RWPE1 (cell line): ENCODE measurements at regions of chr6 and their contacts with region 1.

Region 1: DNA sequence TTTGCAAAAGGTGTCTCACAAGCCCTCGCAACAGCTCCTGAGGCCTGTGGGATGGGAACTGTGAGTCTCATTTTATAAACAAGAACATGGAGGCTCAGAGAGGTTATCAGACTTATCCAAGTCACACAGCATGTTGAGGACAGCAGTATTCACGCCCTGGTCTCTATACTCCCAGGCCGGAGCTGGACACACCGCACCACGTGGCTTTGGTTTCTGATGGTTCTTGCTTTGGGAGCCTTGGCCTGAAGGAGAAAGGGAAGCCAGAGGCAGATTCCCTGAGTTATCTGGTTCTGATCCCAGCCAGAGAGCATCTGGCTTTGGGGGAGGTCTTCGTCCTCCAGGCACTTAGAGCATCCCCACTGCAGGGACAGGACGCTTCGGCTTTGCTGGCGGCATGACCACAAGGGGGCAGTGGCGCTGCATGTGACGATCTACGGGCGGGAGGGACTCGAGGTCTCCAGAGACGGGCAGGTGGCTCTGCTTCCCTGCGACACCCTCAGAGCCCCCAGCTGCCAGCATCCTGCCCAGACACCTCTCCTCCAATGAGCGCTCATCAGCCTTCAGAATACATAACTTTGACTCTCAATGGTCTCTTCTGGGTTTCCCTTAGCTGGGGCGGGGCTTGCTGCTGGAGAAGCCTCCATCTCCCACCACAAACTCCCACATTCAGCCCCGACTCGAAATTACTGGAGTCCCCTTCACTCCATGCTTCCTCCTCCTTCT is 51.4 kb upstream of the SAYSD1 start:
- DNase-seq: peak; percentile 77
- H3K27ac ChIP-seq: no peak overlapping the region
- CTCF ChIP-seq: peak; percentile 86

Region 2: DNA sequence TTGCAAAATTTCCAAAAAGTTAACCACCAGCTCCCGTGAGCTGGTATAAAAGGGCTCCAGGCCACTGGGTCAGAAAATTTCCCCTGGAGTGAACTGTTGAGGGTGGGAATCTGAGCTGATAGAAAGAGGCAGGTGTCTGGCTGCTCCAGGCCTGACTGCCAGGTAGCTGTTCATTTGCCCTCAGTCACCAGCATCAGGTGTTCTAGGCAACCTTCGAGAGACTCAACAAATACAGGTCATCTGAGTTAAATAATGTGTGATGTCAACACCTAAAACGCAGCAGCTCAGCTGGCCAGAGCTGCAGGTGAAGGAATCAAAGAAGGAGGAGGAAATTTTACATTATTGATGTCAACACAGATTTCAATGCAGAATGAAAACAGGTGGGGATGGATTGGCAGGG is 16.3 kb after region 1 on chr6:
- CTCF ChIA-PET with region 1: interaction called, 12 read pairs
- POLR2A ChIA-PET with region 1: no interaction called
- DNase-seq: no peak
- H3K27ac ChIP-seq: no peak overlapping the region
- CTCF ChIP-seq: no peak

Region 3: DNA sequence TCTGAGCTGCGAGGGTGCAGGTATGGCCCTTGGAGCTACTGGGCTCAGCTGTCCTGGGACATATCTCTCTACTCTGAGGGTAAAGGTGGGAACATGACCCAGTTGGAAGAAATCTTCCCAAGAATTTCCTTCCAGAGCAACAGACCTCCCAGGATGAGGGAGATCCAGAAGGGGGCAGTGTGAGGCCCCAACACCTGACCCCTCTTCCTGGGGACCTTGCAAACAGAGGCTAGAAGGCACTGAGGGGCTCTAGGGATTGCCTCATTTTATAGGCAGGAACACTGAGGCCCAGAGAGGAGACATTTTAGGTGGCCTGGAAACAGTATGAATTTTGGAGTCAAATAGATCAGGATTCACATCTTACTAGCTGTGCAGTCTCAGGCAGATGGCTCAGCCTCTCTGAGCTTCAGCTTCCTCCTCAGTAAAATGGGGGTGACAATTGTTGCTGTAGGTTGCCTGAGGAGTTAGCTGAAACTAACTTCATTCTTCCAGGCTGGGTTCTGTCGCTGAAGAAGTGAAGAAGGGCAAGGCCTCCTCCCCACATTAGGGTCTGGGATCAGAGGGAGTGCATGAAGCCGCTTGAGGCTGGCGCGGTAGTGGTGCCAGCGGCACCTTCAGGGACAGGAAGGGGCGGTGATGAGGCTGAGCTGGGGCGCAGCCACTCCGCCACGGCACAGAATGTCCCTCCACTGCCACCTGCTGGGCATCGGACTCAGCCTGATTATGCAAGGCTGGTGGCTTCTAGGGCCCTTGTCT is 136.5 kb after region 1 on chr6:
- CTCF ChIA-PET with region 1: interaction called, 116 read pairs
- POLR2A ChIA-PET with region 1: no interaction called
- DNase-seq: peak; percentile 85
- H3K27ac ChIP-seq: no peak overlapping the region
- CTCF ChIP-seq: peak; percentile 88

Region 4: GRCh38 chr6:39309942-39310531 is 143.7 kb after region 1 on chr6:
- CTCF ChIA-PET with region 1: interaction called, 116 read pairs
- POLR2A ChIA-PET with region 1: no interaction called
- DNase-seq: peak; percentile 81
- H3K27ac ChIP-seq: no peak overlapping the region
- CTCF ChIP-seq: peak; percentile 84